Right ventricle myocardium superior (tissue), 1 donor: ENCODE measurements at regions of chr5 and their contacts with region 1.

Region 1: DNA sequence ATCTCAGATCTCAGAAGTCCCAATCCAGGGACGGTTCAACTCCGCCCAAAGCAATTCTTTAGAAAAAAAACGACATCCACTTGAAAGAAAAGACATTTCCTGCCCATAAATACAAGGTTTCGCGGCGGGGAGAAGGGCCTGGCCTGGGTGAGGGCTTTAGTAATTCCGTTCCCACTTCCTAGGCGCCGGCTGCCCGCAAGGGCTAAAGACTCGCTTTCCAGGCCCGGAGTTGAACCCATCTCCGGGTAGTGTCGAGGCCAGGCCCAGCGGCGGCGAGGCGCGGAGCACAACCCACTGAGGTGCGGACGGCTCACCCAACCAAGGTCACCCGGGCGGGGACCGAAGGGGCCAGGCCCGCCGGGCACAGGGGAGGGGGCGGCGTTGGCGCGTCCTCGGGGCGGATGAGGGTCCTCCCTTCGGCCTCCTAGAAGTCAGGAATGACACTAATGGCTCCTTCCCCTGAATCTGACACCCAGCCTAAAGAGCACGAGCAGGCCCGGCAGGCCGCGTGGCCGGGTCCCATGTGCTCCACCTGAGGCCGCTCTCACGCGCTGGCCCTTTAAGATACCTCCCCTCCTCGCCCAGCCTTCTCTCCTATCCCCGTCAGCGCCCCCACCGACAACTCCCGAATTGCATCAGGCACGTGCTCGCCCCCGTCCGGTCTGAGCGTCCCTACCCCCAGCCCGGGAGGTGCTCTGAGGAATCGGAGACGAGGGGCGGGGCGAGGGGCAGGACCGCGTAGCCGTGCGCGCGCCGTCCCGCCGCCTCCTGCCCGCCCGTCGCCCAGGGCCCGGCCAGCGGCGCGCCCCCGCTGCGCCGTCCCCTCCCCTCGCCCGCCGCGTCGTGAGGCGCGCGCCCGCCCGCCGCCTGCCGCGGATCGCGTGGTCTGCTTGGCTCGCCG is 467 bp upstream of the LARP1 start:
- DNase-seq: peak; percentile 100
- ATAC-seq: peak; percentile 92

Region 2: GRCh38 chr5:153907170-153907775 is 847.4 kb before region 1 on chr5:
- intact Hi-C with region 1: no loop called
- DNase-seq: no peak
- ATAC-seq: no peak

Region 3: DNA sequence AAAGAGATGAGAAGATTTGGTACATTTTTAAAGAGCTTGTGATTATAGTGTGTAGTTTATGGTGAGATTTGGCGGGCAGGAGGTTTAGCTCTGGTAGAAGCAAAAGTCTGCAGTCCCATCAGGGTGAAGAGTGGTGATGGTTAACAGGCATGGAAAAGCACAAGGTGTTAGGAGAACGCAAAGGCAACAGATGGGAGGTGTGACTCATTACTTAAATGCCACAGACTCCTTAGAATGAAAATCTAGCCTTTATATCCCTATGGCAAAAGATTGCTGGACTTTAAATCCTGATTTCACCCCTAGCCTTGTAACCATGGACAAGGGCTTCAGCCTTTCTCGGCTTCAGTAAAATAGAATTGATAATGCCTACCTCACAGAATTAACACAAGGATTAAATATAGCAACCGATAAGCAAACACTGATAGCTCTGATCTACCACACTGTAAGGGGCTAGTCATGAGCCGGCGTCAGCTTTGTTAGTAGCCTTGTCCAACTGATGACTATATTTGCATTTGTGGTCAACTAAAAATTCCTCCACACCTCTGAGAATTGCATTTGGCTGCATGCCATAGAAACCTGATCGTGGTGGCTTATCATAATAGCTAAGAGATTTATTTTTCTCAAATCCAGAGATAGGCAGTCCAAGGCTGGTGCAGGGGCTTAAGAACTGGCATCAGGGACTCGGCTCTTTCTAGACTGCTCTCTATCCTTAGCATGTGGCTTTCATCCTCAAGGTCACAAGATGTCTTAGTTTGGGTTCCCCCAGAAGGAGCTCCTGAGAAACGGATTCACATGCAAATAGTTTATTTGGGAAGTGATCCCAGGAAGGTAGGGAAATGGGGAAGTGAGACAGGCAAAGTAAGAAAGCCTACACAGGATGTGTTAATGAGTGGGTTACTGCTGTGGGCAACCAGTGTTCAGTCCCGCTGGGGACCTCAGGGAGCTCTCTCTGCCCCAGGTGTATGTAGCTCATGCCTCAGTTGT is 696.4 kb before region 1 on chr5:
- intact Hi-C with region 1: no loop called
- DNase-seq: no peak
- ATAC-seq: peak; percentile 43

Region 4: GRCh38 chr5:154683101-154683880 is 71.4 kb before region 1 on chr5:
- intact Hi-C with region 1: loop called (anchors 5 kb)
- DNase-seq: no peak
- ATAC-seq: peak; percentile 12